ENCODE measurements at regions of chr7 and their contacts with region 1.

Region 1: GRCh38 chr7:139645572-139646523 is 122.4 kb downstream of the CLEC2L start:
- DNase-seq: peak; percentile 75 to 79 (median 76)
- H3K4me3 ChIP-seq: no peak overlapping the region
- H3K4me3 Mint-ChIP-seq: peak overlapping the region in 3 of 8 donors; percentile 2 to 68 (median 8)
- H3K27ac ChIP-seq: no peak overlapping the region
- H3K27ac Mint-ChIP-seq: peak overlapping the region in 6 of 7 donors; percentile 7 to 90 (median 82)
- H3K4me1 ChIP-seq: peaks cover 49% of the 10 kb centered on the region
- H3K4me1 Mint-ChIP-seq: peaks cover 35 to 72% (median 53%) of the 10 kb centered on the region in 4 donors
- H3K27me3 ChIP-seq: no peaks in the 10 kb centered on the region
- H3K27me3 Mint-ChIP-seq: no peaks in the 10 kb centered on the region

Region 2: GRCh38 chr7:139058943-139059342 is 586.9 kb before region 1 on chr7:
- CTCF ChIA-PET with region 1: no interaction called
- POLR2A ChIA-PET with region 1: no interaction called
- intact Hi-C with region 1: no loop called
- DNase-seq: no peak
- H3K4me3 ChIP-seq: no peak overlapping the region
- H3K4me3 Mint-ChIP-seq: no peak overlapping the region
- H3K27ac ChIP-seq: no peak overlapping the region
- H3K27ac Mint-ChIP-seq: peak overlapping the region in 5 of 7 donors; percentile 10 to 86 (median 70)
- H3K4me1 ChIP-seq: peaks cover 45% of the 10 kb centered on the region
- H3K4me1 Mint-ChIP-seq: peaks cover 36 to 50% (median 42%) of the 10 kb centered on the region in 4 donors
- H3K27me3 ChIP-seq: no peaks in the 10 kb centered on the region
- H3K27me3 Mint-ChIP-seq: no peaks in the 10 kb centered on the region

Region 3: DNA sequence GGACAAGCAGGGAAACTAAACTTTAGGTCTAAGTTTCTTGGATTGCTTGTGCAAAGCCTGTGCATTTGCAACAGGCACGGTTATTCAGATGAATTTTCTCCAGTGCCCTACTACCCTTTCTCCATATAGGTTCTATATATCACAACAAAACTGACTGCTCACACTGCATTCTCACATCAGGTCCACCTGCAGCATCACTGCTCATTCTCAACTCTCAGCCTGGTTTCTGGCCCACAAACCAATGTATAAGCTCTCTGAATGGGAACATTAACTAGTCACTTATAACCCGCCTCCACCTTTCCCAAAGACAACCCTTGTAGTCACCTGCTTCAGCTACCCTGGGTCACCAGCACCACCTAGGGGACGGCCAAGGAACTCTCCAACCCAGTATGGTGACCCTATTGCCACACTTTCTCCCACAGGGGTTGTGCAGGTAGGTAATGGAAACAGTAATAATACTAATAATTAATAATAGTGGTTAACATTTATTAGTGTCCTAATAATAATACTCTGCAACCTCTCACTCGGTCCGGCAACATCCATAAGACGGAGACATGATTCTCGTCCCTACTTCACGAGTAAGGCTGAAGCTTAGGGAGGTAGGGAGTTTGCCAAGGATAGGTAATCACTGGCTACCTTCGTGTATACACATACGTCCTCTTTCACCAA is 25.0 kb before region 1 on chr7:
- CTCF ChIA-PET with region 1: interaction called, 40 read pairs
- POLR2A ChIA-PET with region 1: interaction called, 12 read pairs
- intact Hi-C with region 1: no loop called
- DNase-seq: peak in 4 of 5 donors; percentile 47 to 55 (median 52)
- H3K4me3 ChIP-seq: no peak overlapping the region
- H3K4me3 Mint-ChIP-seq: no peak overlapping the region
- H3K27ac ChIP-seq: no peak overlapping the region
- H3K27ac Mint-ChIP-seq: peak overlapping the region in 2 of 7 donors; percentile 16 to 30
- H3K4me1 ChIP-seq: no peaks in the 10 kb centered on the region
- H3K4me1 Mint-ChIP-seq: peaks cover 16 to 23% (median 19%) of the 10 kb centered on the region in 4 donors
- H3K27me3 ChIP-seq: no peaks in the 10 kb centered on the region
- H3K27me3 Mint-ChIP-seq: no peaks in the 10 kb centered on the region

Region 4: DNA sequence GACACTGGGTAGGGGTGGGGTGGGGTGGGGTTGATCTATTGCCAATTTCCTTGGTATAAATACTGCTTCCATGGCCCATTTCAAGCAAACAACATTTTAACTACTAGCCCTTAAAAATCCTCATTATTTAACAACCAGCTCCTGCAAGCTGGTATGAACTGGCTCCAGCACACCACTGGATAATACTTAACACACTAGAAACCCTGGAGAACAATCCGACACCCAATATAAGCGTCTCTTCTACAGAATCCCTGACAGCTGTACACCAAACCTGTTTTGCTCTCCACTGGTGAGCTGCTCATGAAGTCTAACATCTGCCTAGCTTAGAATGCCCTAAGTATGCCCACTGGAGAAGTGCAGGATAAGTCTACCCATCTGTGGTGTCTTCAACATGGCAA is 15.2 kb after region 1 on chr7:
- CTCF ChIA-PET with region 1: interaction called, 40 read pairs
- POLR2A ChIA-PET with region 1: no interaction called
- intact Hi-C with region 1: no loop called
- DNase-seq: no peak
- H3K4me3 ChIP-seq: no peak overlapping the region
- H3K4me3 Mint-ChIP-seq: no peak overlapping the region
- H3K27ac ChIP-seq: no peak overlapping the region
- H3K27ac Mint-ChIP-seq: peak overlapping the region in 3 of 7 donors; percentile 23 to 57 (median 32)
- H3K4me1 ChIP-seq: no peaks in the 10 kb centered on the region
- H3K4me1 Mint-ChIP-seq: peaks cover 21 to 42% (median 36%) of the 10 kb centered on the region in 4 donors
- H3K27me3 ChIP-seq: no peaks in the 10 kb centered on the region
- H3K27me3 Mint-ChIP-seq: no peaks in the 10 kb centered on the region

Region 5: DNA sequence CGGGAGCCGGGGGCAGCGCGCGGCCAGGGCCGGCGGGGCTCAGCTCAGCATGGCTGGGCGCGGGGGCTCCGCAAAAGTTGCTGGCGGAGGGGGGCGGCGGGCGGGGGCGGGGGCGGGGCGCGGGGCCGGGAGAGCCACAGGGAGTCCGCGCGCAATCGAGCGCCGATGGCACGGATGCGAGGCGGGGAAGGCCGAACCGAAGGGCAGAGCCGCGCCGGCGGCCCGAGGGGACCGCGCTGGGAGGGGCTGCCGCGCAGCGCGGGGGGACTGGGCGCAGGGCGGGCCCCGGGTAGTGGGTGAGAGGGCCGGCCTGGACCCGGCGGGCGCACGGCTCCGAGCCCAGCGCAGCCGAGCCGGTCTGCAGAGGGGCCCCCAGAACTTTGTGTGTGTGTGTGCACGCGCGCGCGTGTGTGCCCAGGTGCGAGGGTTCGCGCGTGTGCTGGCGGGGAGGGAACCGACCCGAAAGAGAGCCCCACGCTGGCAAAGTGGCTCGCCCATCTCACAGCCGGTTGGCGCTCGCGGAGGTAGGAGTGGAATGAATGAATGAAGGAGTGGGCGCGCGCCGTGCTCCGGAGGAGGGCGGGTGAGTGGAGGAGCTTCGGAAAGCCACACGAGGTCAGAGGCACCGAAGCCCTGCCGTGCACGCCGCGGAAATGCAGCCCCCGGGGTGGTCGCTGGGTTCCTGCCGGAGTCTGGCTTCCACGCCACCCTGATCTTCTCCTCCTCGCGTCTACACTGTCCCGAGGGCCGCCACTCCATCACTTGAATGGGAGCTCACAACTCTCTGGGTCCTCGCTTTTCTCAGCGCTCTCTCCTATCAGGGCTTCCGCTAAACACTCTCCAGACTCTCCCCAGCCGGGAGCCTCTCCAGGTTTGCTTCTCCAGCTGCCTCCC is 132.3 kb after region 1 on chr7 and contains the start of gene HIPK2:
- CTCF ChIA-PET with region 1: interaction called, 15 read pairs
- POLR2A ChIA-PET with region 1: no interaction called
- intact Hi-C with region 1: loop called (anchors 1 kb)
- DNase-seq: peak; percentile 69 to 80 (median 74)
- H3K4me3 ChIP-seq: peak within 1 kb of the TSS; percentile 73 to 92
- H3K4me3 Mint-ChIP-seq: peak within 1 kb of the TSS; percentile 96 to 100 (median 99)
- H3K27ac ChIP-seq: peak within 1 kb of the TSS; percentile 64
- H3K27ac Mint-ChIP-seq: peak within 1 kb of the TSS; percentile 97 to 99 (median 98)
- H3K4me1 ChIP-seq: peaks cover 40% of the 10 kb centered on the region
- H3K4me1 Mint-ChIP-seq: peaks cover 30 to 57% (median 40%) of the 10 kb centered on the region in 4 donors
- H3K27me3 ChIP-seq: no peaks in the 10 kb centered on the region
- H3K27me3 Mint-ChIP-seq: peaks cover 2 to 7% of the 10 kb centered on the region in 2 donors
- total RNA-seq, gene HIPK2: 31.2 to 34.1 TPM

Region 6: DNA sequence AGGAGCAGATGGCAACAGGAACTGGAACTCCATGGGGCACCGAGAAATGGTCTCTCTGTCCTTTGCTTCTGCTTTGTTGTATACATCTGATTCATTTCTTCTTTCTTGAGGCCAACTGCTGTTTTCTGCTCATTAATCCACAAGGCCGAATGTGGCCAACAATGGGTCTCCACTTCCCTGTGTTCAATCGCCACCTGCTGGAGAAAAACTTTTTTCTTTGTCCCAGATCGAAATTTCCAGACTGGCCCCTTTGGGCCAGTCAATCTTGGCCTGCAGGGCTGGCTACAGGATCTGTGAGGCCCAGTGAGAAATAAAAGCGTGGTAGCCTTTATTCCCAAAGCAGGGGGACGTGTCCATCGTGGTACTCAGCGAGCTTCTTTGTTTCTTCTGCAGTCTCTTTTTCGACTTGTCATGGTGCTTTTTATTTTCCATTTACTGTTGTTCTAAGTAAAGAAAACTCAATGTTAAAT is 358.1 kb after region 1 on chr7:
- CTCF ChIA-PET with region 1: interaction called, 203 read pairs
- POLR2A ChIA-PET with region 1: interaction called, 4 read pairs
- intact Hi-C with region 1: loop called (anchors 1 kb)
- DNase-seq: peak in 4 of 5 donors; percentile 22 to 41 (median 32)
- H3K4me3 ChIP-seq: no peak overlapping the region
- H3K4me3 Mint-ChIP-seq: no peak overlapping the region
- H3K27ac ChIP-seq: no peak overlapping the region
- H3K27ac Mint-ChIP-seq: peak overlapping the region in 3 of 7 donors; percentile 8 to 59 (median 38)
- H3K4me1 ChIP-seq: no peaks in the 10 kb centered on the region
- H3K4me1 Mint-ChIP-seq: peaks cover 0 to 5% (median 3%) of the 10 kb centered on the region in 4 donors
- H3K27me3 ChIP-seq: no peaks in the 10 kb centered on the region
- H3K27me3 Mint-ChIP-seq: no peaks in the 10 kb centered on the region